PC-3 (cell line): ENCODE measurements at regions of chr2 and their contacts with region 1.

Region 1: GRCh38 chr2:55771612-55772011 is 78.0 kb upstream of the PNPT1 start:
- DNase-seq: peak; percentile 71
- ATAC-seq: peak; percentile 54; the same call in 1 of the 2 replicates
- H3K4me3 ChIP-seq: no peak overlapping the region
- H3K27ac ChIP-seq: no peak overlapping the region
- H3K4me1 ChIP-seq: peaks cover 7% of the 10 kb centered on the region
- H3K27me3 ChIP-seq: no peaks in the 10 kb centered on the region
- CTCF ChIP-seq: peak; percentile 92

Region 2: DNA sequence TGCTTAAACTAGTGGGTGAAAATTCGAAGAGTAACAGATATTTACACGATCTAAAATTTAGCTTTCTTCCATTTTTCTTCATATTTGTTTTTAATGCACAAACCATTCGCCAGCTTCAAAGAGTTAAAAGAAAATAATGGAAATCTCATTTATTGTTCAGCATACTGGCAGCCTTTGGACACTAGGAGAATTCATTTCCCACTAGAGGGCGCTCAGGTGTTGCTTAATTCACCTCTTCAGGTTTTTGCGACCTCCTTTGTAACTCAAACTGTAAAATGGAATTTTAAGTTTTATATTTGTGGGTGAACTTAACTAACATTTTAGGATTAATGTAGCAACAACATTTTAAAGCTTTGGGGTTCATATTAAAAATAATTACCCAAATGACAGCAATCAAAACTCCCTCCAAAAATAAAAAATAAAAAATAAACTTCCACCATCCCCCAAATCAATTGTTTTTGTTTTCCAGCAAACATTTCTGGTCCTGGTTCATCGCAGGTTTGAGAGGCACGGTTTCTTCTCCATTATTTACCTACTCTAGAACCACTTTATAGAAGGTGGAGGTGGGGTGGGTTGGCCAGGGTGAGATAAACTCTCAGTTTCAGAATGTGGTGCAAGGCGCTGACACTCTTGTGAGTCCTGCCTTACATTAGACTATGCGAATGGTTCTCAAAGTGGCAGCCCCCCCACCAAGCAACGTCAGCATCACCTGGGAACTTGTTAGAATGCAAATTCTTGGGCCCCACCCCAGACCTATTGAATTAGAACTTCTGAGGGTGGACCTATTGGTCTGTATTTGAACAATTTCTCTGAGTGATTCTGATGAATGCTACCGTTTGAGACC is 53.2 kb before region 1 on chr2:
- CTCF ChIA-PET with region 1: no interaction called
- POLR2A ChIA-PET with region 1: no interaction called
- intact Hi-C with region 1: loop called (anchors 2 kb)
- DNase-seq: peak; percentile 86
- ATAC-seq: peak; percentile 74
- H3K4me3 ChIP-seq: no peak overlapping the region
- H3K27ac ChIP-seq: no peak overlapping the region
- H3K4me1 ChIP-seq: peaks cover 22% of the 10 kb centered on the region
- H3K27me3 ChIP-seq: no peaks in the 10 kb centered on the region
- CTCF ChIP-seq: peak; percentile 93

Region 3: DNA sequence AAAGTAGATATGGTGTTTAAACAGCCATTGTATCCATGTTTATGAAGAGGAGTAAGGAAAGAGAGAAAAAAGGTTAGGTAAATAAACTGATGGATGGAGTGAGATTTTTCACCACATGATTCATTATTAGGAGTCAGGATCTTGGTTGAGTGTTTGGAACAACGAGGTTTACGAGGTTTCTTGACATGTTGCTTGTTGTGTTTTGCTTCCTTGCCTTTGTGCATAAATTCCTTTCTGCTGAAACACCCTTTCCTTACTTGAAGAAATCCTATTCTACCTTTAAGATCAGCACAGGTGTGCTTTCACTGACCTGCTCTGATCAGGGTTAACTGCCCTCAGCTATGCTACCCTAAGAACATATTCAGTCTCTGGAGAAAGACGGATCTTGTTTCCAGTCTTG is 85.3 kb after region 1 on chr2:
- CTCF ChIA-PET with region 1: no interaction called
- POLR2A ChIA-PET with region 1: no interaction called
- intact Hi-C with region 1: loop called (anchors 5 kb)
- DNase-seq: peak; percentile 94
- ATAC-seq: peak; percentile 89
- H3K4me3 ChIP-seq: peak overlapping the region; percentile 19; the same call in 1 of the 2 replicates
- H3K27ac ChIP-seq: peak overlapping the region; percentile 83
- H3K4me1 ChIP-seq: peaks cover 28% of the 10 kb centered on the region
- H3K27me3 ChIP-seq: no peaks in the 10 kb centered on the region
- CTCF ChIP-seq: no peak

Region 4: GRCh38 chr2:55923091-55923981 is 151.7 kb after region 1 on chr2 and contains the start of gene EFEMP1:
- CTCF ChIA-PET with region 1: no interaction called
- POLR2A ChIA-PET with region 1: no interaction called
- intact Hi-C with region 1: loop called (anchors 1 kb)
- DNase-seq: peak; percentile 69
- ATAC-seq: peak; percentile 90
- H3K4me3 ChIP-seq: peak within 1 kb of the TSS; percentile 83
- H3K27ac ChIP-seq: no peak within 1 kb of the TSS
- H3K4me1 ChIP-seq: peaks cover 18% of the 10 kb centered on the region
- H3K27me3 ChIP-seq: no peaks in the 10 kb centered on the region
- CTCF ChIP-seq: peak; percentile 28; the same call in 1 of the 2 replicates
- total RNA-seq, gene EFEMP1: 52.0 and 59.6 TPM in 2 replicates

Region 5: DNA sequence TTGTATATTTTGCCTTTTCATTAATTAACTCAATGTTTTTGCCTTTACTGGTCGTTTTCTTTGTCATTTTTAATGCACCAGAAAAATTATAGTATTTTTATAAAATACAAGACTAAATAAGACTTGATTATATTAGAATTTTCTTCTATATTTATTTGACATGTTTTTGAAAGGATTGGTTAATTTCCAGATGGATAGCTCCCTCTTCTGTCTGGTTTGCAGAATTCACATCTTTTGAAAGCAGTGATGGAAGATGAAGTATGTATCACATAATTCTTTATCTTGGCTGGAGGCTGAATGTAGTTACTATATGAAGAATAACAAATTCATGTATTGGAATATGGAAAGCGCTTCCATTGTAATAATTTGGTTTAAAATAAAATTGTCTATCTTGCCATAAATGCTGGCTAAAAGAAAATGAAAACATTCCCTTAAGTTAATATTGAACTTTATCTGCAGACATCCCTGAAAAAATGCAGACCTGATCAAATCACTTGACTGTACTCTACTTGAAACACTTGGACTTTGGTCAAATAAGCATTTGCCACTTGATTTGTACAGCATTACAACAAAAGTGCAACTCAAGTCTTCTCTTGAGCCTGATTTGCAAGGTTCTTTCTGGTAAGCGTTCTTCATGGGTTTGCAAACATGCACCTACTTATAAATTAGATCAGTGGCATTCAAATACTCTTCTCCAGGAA is 238.3 kb after region 1 on chr2:
- CTCF ChIA-PET with region 1: no interaction called
- POLR2A ChIA-PET with region 1: interaction called, 3 read pairs
- intact Hi-C with region 1: loop called (anchors 1 kb)
- DNase-seq: peak; percentile 72
- ATAC-seq: no peak
- H3K4me3 ChIP-seq: no peak overlapping the region
- H3K27ac ChIP-seq: no peak overlapping the region
- H3K4me1 ChIP-seq: peaks cover 10% of the 10 kb centered on the region; the same call in 1 of the 2 replicates
- H3K27me3 ChIP-seq: no peaks in the 10 kb centered on the region
- CTCF ChIP-seq: peak; percentile 73